ENCODE measurements at regions of chr3 and their contacts with region 1.

Region 1: DNA sequence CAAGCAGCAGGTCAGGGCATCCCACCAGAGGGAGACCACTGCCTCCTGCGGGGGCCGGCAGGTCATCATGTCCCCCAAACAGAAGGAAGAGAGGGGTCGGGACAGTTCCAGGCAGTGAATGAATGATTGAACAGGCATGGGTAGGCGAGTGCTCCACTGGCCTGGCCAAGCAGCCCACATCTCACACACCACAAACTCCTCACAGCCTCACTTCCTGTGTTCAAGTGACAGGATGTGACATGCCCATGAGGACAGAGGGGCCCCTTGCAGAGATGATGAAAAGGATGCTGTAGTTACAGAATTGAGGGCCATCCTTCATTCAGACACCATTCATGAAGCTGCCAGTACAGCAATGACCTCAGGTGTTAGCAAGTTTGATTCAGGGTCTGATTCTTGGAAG is 3.7 kb downstream of the IQSEC1 start:
- DNase-seq: peak; percentile 72
- ATAC-seq: peak; percentile 87
- H3K4me3 Mint-ChIP-seq: peak overlapping the region; percentile 81
- H3K27ac Mint-ChIP-seq: peak overlapping the region; percentile 97
- H3K4me1 Mint-ChIP-seq: peaks cover 47% of the 10 kb centered on the region
- H3K27me3 Mint-ChIP-seq: peaks cover 3% of the 10 kb centered on the region

Region 2: GRCh38 chr3:13012228-13012691 is 57.2 kb before region 1 on chr3:
- POLR2A ChIA-PET with region 1: interaction called, 35 read pairs
- DNase-seq: peak; percentile 51
- ATAC-seq: peak; percentile 25
- H3K4me3 Mint-ChIP-seq: peak overlapping the region; percentile 82
- H3K27ac Mint-ChIP-seq: peak overlapping the region; percentile 98
- H3K4me1 Mint-ChIP-seq: peaks cover 67% of the 10 kb centered on the region
- H3K27me3 Mint-ChIP-seq: no peaks in the 10 kb centered on the region

Region 3: GRCh38 chr3:13119471-13120220 is 50.2 kb after region 1 on chr3:
- POLR2A ChIA-PET with region 1: no interaction called
- DNase-seq: peak; percentile 15
- ATAC-seq: no peak
- H3K4me3 Mint-ChIP-seq: no peak overlapping the region
- H3K27ac Mint-ChIP-seq: no peak overlapping the region
- H3K4me1 Mint-ChIP-seq: no peaks in the 10 kb centered on the region
- H3K27me3 Mint-ChIP-seq: peaks cover 2% of the 10 kb centered on the region

Measured in activated naive CD8-positive, alpha-beta T cell treated with anti-CD3 and anti-CD28 coated beads, Interleukin-2, amount 10 ng/mL, durations not matched to agents 7 days and 5 days (primary cell).